ENCODE measurements at regions of chr3 and their contacts with region 1.

Region 1: DNA sequence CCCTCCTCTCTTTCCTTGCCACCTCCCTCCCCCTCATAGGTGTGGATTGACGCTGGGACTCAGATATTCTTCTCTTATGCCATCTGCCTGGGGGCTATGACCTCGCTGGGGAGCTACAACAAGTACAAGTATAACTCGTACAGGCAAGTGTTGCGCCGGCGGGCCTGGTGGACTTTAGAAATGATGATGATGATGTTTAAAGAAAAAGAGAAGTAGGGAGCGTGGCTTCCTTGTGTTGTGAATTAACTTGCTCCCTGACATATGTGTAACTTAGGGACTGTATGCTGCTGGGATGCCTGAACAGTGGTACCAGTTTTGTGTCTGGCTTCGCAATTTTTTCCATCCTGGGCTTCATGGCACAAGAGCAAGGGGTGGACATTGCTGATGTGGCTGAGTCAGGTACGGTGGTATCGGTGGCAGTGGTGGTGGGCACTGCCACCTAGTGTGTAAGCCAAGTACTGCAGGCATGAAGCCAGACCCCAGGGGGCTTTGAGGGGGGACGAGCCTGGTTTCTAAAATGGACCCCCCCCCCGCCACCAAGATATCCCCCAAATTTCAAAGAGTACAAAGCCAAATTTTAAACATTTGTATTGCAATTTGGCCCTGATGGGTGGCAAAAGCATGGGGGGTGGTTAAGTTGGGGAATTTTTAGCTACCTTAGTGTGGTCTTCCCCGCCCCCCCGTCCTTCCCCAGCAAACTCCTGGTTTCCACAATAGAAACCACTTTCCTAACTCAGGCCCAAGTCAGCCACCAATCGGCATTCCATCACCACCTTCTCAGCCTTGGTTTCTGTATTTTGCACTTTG is 65.6 kb downstream of the SLC6A6 start:
- DNase-seq: peak; percentile 41
- H3K4me3 ChIP-seq: no peak overlapping the region
- H3K27ac ChIP-seq: no peak overlapping the region
- H3K4me1 ChIP-seq: peaks cover 7% of the 10 kb centered on the region
- H3K27me3 ChIP-seq: no peaks in the 10 kb centered on the region
- CTCF ChIP-seq: peak; percentile 64 to 85
- POLR2A ChIP-seq: no peak

Region 2: DNA sequence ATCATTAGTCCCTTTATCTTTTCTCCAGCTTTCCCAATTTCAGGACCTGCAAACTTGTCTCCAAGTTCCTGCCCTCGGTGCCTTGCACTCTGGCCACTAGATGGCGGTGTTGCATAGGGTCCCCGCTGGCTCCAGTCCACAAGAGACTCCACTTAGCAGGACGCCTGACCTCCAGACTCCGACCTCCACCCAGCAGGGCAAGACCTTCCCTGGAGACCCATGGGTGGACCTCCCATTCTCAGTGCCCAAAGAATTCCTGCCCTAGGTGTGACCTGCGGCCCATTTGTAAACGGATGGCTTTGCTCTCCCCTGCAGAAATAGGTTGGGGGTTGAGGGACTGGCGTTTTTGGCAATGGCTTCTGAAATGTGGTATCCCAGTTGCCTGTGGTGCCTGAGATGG is 206.8 kb before region 1 on chr3:
- CTCF ChIA-PET with region 1: interaction called, 37 read pairs
- POLR2A ChIA-PET with region 1: interaction called, 17 read pairs
- dilution Hi-C with region 1: no loop called
- intact Hi-C with region 1: loop called (anchors 1 kb)
- DNase-seq: peak; percentile 81
- H3K4me3 ChIP-seq: no peak overlapping the region
- H3K27ac ChIP-seq: no peak overlapping the region
- H3K4me1 ChIP-seq: no peaks in the 10 kb centered on the region
- H3K27me3 ChIP-seq: peaks cover 6 to 9% of the 10 kb centered on the region in 2 experiments
- CTCF ChIP-seq: peak; percentile 90 to 91
- POLR2A ChIP-seq: no peak

Region 3: DNA sequence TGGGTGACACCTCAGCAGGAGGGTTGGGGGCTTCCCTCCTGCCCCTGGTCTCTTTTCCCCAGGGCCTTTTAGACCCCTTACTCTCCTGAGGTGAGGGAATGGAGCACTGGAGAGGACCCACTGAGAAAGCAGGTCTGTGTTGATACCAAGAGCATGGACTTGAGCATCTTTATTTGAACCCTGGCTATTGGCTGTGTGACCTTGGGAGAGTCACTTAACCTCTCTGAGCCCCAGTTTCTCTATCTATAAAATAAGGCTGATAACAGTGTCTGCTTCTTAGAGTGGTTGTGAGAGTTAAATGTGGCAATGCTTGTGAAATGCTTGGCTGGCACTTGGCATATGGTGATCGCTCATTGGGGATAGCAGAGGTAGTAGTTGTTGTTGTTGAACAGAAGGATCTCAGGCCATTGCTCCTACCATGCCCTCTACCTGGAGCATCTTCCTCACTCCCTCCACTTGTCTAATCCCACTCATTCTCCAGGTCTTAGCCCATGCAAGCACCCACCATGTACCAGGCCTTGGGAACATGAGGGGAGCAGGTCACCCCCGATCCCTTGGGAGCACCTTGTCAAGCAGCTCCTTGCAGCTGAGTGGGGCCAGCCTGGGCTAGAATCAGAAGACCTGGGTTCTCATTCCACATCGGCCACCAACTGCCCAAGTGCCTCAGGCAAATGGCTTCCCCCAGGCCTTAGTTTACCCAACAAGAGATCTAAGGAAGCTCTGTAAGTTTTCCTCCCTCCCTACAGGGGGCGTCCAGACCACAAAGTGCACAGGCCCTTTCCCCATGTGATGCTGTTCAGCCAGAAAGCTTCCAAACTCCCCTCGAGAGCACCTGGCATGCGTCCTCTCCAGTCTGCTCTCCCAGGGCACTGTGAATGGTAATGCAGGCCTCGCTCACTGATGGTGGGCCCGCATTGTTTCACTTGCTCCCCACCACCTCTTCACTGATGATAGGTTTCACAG is 192.7 kb before region 1 on chr3:
- CTCF ChIA-PET with region 1: interaction called, 35 read pairs
- POLR2A ChIA-PET with region 1: no interaction called
- dilution Hi-C with region 1: no loop called
- intact Hi-C with region 1: loop called (anchors 1 kb)
- DNase-seq: peak; percentile 11
- H3K4me3 ChIP-seq: no peak overlapping the region
- H3K27ac ChIP-seq: no peak overlapping the region
- H3K4me1 ChIP-seq: no peaks in the 10 kb centered on the region
- H3K27me3 ChIP-seq: no peaks in the 10 kb centered on the region
- CTCF ChIP-seq: peak; percentile 31 to 55
- POLR2A ChIP-seq: no peak

Region 4: GRCh38 chr3:14358426-14359211 is 109.4 kb before region 1 on chr3:
- CTCF ChIA-PET with region 1: no interaction called
- POLR2A ChIA-PET with region 1: no interaction called
- dilution Hi-C with region 1: no loop called
- intact Hi-C with region 1: no loop called
- DNase-seq: no peak
- H3K4me3 ChIP-seq: no peak overlapping the region
- H3K27ac ChIP-seq: no peak overlapping the region
- H3K4me1 ChIP-seq: no peaks in the 10 kb centered on the region
- H3K27me3 ChIP-seq: peaks cover 0 to 3% of the 10 kb centered on the region in 2 experiments
- CTCF ChIP-seq: no peak
- POLR2A ChIP-seq: no peak

Region 5: GRCh38 chr3:14482271-14482721 is 14.3 kb after region 1 on chr3:
- CTCF ChIA-PET with region 1: no interaction called
- POLR2A ChIA-PET with region 1: no interaction called
- dilution Hi-C with region 1: no loop called
- intact Hi-C with region 1: loop called (anchors 1 kb)
- DNase-seq: peak; percentile 87
- H3K4me3 ChIP-seq: no peak overlapping the region
- H3K27ac ChIP-seq: peak overlapping the region; percentile 9
- H3K4me1 ChIP-seq: peaks cover 17% of the 10 kb centered on the region
- H3K27me3 ChIP-seq: no peaks in the 10 kb centered on the region
- CTCF ChIP-seq: no peak
- POLR2A ChIP-seq: no peak

Measured in endothelial cell of umbilical vein (primary cell).